Activated naive CD4-positive, alpha-beta T cell treated with anti-CD3 and anti-CD28 coated beads for 36 hours (primary cell): ENCODE measurements at regions of chr9 and their contacts with region 1.

Region 1: DNA sequence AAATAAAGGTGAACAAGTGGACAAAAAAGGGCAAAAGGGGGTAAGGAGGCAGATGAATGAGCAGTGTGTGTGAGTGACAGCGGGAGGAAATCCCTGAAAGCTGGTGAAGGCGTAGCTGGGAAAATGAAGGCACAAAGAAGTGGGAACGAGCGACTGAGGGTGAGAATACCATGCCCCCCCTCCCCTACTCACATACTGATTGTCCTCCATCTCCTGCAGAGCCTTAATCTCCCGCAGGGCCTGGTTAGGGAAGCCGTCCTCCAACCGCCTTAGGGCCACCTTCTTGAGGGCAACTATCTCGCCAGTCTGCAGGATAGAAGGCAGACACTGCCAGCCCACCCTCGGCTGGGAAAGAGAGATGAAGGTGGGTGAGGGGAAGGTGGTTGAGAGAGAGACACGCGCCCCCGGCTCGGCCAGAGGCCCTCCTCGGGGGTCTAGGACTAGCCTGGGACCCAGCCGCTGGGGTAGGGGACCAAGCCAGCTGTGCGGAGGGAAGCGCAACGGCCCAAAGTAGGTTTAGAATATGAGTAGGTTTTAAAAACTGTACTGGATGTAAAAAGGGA is 522 bp downstream of the CDK20 start:
- DNase-seq: no peak
- H3K4me3 Mint-ChIP-seq: peak overlapping the region; percentile 93
- H3K27ac Mint-ChIP-seq: no peak overlapping the region
- H3K4me1 Mint-ChIP-seq: peaks cover 19% of the 10 kb centered on the region
- H3K27me3 Mint-ChIP-seq: no peaks in the 10 kb centered on the region

Region 2: GRCh38 chr9:88007206-88007631 is 33.4 kb after region 1 on chr9:
- CTCF ChIA-PET with region 1: no interaction called
- intact Hi-C with region 1: loop called (anchors 1 kb)
- DNase-seq: peak; percentile 88
- H3K4me3 Mint-ChIP-seq: no peak overlapping the region
- H3K27ac Mint-ChIP-seq: peak overlapping the region; percentile 51
- H3K4me1 Mint-ChIP-seq: peaks cover 12% of the 10 kb centered on the region
- H3K27me3 Mint-ChIP-seq: peaks cover 4% of the 10 kb centered on the region

Region 3: DNA sequence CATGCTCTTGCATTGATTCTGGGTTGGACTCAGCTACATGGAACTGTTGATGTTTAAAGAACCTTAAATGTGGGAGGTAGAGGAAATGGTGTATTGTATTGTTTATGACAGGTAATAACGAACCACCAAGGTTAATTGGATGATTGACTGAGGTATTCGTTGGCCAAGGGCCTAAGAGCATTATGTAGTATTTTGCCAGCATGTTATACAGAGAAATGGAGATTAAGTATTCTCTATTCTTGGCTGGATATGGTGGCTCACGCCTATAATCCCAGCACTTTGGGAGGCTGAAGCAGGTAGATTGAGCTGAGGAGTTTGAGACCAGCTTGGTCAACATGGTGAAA is 59.5 kb after region 1 on chr9:
- CTCF ChIA-PET with region 1: no interaction called
- intact Hi-C with region 1: no loop called
- DNase-seq: no peak
- H3K4me3 Mint-ChIP-seq: no peak overlapping the region
- H3K27ac Mint-ChIP-seq: no peak overlapping the region
- H3K4me1 Mint-ChIP-seq: no peaks in the 10 kb centered on the region
- H3K27me3 Mint-ChIP-seq: peaks cover 7% of the 10 kb centered on the region